ENCODE measurements at regions of chr6 and their contacts with region 1.

Region 1: GRCh38 chr6:111997078-111997852 is 56.6 kb upstream of the CCN6 start:
- DNase-seq: peak; percentile 77 to 81
- ATAC-seq: peak; percentile 86 to 94 (median 92)
- H3K4me3 ChIP-seq: peak overlapping the region in 7 of 10 donors; percentile 6 to 33 (median 23)
- H3K27ac ChIP-seq: peak overlapping the region in 9 of 10 donors; percentile 15 to 65 (median 48)
- H3K4me1 ChIP-seq: peaks cover 0 to 23% (median 6%) of the 10 kb centered on the region in 9 donors
- H3K27me3 ChIP-seq: peaks cover 0 to 4% (median 0%) of the 10 kb centered on the region in 7 donors
- CTCF ChIP-seq: peak; percentile 88 to 97 (median 92)

Region 2: DNA sequence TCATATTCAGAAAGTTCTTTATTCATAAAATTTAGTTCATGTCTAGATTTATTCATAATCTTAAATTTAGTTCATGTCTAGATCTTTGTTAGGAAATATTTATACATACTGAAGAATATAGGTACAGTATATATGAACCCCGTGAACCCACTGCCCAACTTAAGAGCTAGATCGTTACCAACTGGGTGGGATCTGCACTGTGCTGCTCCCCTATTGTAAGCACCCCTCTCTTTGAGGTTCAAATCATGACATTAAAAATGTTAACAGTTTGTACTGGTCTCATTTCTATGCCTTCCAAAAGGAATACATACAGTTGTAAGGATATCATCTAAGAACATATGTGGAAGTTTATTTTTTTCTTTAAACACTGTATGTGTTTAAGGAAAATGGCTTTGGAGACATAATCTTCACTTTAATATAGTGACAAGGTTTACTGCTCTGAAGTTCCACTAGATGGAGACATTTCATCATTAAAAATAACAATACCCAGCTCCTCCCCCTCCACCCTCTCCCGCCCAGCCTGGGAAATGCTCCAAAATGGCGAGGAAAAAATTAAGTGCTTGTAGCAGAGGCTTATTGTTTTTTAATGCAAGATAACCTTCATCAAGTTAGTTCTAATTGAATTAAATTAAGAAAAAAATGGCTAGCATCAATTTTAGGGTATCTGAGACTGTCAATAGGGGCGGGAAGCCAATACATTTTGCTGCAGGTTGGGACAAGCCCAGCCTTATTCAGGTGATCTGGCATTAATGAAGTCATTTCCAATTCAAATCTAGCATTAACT is 287.5 kb before region 1 on chr6:
- intact Hi-C with region 1: loop called (anchors 1 to 5 kb)
- DNase-seq: peak; percentile 41 to 86
- ATAC-seq: peak; percentile 74 to 89 (median 78)
- H3K4me3 ChIP-seq: peak overlapping the region in 4 of 10 donors; percentile 7 to 25 (median 12)
- H3K27ac ChIP-seq: peak overlapping the region in 9 of 10 donors; percentile 10 to 72 (median 49)
- H3K4me1 ChIP-seq: peaks cover 12 to 42% (median 33%) of the 10 kb centered on the region in 9 donors
- H3K27me3 ChIP-seq: no peaks in the 10 kb centered on the region
- CTCF ChIP-seq: peak; percentile 44 to 83 (median 75)

Region 3: GRCh38 chr6:111804627-111805235 is 192.5 kb before region 1 on chr6:
- intact Hi-C with region 1: loop called in 1 of 10 experiments (anchors 10 kb)
- DNase-seq: no peak
- ATAC-seq: peak; percentile 36 to 74 (median 62)
- H3K4me3 ChIP-seq: no peak overlapping the region
- H3K27ac ChIP-seq: peak overlapping the region in 8 of 10 donors; percentile 20 to 80 (median 57)
- H3K4me1 ChIP-seq: peaks cover 6 to 72% (median 48%) of the 10 kb centered on the region in 9 donors
- H3K27me3 ChIP-seq: no peaks in the 10 kb centered on the region
- CTCF ChIP-seq: peak in 3 of 9 donors; percentile 15 to 36 (median 33)

Region 4: GRCh38 chr6:112043032-112044007 is 46.1 kb after region 1 on chr6:
- intact Hi-C with region 1: loop called in 5 of 10 experiments (anchors 1 to 5 kb)
- DNase-seq: peak; percentile 87
- ATAC-seq: peak; percentile 88 to 99 (median 94)
- H3K4me3 ChIP-seq: peak overlapping the region; percentile 33 to 75 (median 58)
- H3K27ac ChIP-seq: peak overlapping the region; percentile 57 to 88 (median 78)
- H3K4me1 ChIP-seq: peaks cover 0 to 37% (median 12%) of the 10 kb centered on the region in 9 donors
- H3K27me3 ChIP-seq: no peaks in the 10 kb centered on the region
- CTCF ChIP-seq: peak; percentile 88 to 99 (median 95)

Region 5: DNA sequence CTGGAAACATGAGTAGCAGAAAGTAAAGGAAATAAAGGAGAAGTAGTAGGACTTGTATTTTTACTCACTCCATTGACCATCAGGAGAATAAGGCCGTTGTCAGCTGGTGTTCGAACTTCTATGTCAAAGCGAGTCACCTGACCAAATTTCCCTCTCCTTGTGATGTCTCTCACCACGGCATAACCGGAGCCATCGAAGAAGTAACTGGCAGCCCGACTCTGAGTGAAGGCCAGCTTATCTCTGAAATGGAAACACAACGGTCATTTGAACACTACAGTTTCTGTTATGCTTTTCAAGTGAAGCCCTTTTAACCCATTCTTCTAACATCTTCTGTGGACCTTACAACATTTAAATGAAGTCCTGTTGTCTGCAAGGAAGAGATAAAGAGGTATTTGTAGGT is 141.8 kb after region 1 on chr6:
- intact Hi-C with region 1: no loop called
- DNase-seq: no peak
- ATAC-seq: peak in 4 of 8 donors; percentile 48 to 62 (median 58)
- H3K4me3 ChIP-seq: no peak overlapping the region
- H3K27ac ChIP-seq: peak overlapping the region in 2 of 10 donors; percentile 1 to 36
- H3K4me1 ChIP-seq: peaks cover 0 to 7% (median 4%) of the 10 kb centered on the region in 9 donors
- H3K27me3 ChIP-seq: no peaks in the 10 kb centered on the region
- CTCF ChIP-seq: no peak

Region 6: GRCh38 chr6:112939563-112939962 is 942.3 kb after region 1 on chr6:
- intact Hi-C with region 1: no loop called
- DNase-seq: no peak
- ATAC-seq: peak in 1 of 8 donors; percentile 12
- H3K4me3 ChIP-seq: no peak overlapping the region
- H3K27ac ChIP-seq: no peak overlapping the region
- H3K4me1 ChIP-seq: peaks cover 0 to 24% (median 3%) of the 10 kb centered on the region in 9 donors
- H3K27me3 ChIP-seq: no peaks in the 10 kb centered on the region
- CTCF ChIP-seq: no peak

Measured in heart right ventricle (tissue), 16 donors.